Tibial artery (tissue), 4 donors: ENCODE measurements at regions of chr9 and their contacts with region 1.

Region 1: DNA sequence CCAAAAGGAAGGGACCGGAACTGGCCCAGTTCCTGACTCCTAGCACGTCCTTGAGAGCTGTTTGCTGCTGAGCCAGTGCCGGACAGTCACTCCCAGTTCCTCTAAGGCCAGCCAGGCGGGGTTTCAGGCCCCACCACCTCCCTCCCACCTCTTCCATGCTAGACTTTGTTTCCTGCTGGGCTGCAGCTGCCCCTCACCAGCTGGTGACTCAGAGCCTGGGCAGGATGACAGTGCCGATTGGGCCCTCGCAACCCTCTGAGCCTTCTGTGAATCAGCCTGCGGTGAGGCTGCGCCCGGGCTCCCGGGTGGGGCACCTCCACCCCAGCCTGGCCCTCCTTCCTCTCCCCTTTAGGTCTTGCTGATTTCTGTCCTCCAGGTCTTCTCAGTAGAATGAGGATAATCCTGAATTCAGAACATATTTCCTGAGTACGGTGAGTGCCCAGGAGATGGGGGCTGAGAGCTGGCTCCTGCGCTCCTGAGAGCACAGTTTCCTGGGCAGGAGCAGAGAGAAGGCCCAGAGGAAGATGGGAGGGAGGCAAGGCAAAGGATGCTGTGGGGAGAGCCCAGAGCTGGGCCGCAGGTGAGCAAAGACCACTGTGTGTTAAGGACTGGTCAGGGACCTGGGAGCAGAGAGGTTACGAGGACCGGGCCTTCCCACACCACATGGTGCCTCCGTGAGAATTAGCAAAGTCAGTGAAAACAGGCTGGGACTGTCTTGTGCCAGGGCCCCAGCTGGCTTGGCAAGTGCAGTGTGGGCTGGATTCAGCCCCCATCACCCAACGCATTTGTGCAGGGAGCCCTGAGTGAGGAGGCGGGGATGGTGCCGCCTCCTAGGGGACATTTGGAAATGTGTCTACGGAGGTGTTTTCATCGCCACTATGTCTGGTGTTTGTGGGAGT is 32.9 kb upstream of the STXBP1 start:
- DNase-seq: peak; percentile 95 to 98
- H3K4me3 ChIP-seq: peak overlapping the region; percentile 41 to 46
- H3K27ac ChIP-seq: peak overlapping the region; percentile 92
- H3K4me1 ChIP-seq: peaks cover 0 to 55% (median 35%) of the 10 kb centered on the region in 4 donors
- H3K27me3 ChIP-seq: no peaks in the 10 kb centered on the region
- CTCF ChIP-seq: peak; percentile 38 to 45

Region 2: GRCh38 chr9:127519301-127520166 is 59.7 kb before region 1 on chr9:
- intact Hi-C with region 1: loop called (anchors 5 kb)
- DNase-seq: peak in 1 of 2 donors; percentile 77
- H3K4me3 ChIP-seq: no peak overlapping the region
- H3K27ac ChIP-seq: peak overlapping the region; percentile 33 to 85
- H3K4me1 ChIP-seq: peaks cover 0 to 45% (median 32%) of the 10 kb centered on the region in 4 donors
- H3K27me3 ChIP-seq: no peaks in the 10 kb centered on the region
- CTCF ChIP-seq: no peak

Region 3: GRCh38 chr9:127541877-127542276 is 37.3 kb before region 1 on chr9:
- intact Hi-C with region 1: loop called (anchors 5 kb)
- DNase-seq: peak; percentile 94 to 98
- H3K4me3 ChIP-seq: peak overlapping the region in 1 of 2 donors; percentile 16
- H3K27ac ChIP-seq: peak overlapping the region; percentile 76 to 77
- H3K4me1 ChIP-seq: peaks cover 29 to 100% (median 90%) of the 10 kb centered on the region in 4 donors
- H3K27me3 ChIP-seq: no peaks in the 10 kb centered on the region
- CTCF ChIP-seq: no peak

Region 4: DNA sequence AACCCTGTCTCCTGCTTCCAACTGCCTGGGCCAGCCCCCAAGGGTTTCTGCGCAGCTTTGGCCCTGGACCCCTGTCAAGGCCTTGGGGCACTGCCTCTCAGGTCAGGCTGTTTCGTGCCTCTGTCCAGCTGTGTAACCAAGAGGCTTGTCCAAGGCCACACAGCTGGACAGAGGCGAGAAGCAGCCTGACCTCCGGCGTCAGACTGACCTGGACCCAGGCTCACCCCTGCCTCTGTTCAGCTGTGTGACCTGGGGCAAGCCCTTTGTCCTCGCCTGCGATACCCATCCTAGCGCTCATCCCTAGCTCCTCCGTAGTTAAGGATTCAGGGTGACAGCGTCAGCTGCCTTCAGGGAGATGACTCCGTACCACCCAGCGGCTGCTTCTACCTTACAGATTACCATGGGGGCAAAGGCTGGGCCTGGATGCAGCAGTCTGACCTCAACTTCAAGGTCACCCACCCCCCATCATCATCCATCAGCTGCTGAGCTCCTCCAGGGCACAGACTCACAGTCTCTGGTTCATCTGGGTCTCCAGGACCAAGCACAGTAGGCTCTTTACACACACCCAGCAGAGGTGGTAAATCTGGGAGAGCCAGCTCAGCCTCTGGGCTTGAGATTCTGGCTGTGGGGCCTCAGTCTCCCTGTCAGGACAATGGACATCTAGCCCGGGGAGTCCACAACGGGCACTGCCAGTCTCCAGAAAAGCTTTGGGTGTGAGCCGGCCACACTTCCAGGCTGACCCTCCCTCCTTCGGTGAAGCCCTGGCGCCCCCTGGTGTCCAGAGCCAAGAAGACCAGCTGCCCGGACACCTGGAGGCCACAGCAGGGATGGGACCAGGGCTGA is 290.3 kb after region 1 on chr9:
- intact Hi-C with region 1: no loop called
- DNase-seq: peak; percentile 90 to 93
- H3K4me3 ChIP-seq: no peak overlapping the region
- H3K27ac ChIP-seq: peak overlapping the region in 1 of 2 donors; percentile 20
- H3K4me1 ChIP-seq: peaks cover 0 to 17% (median 15%) of the 10 kb centered on the region in 4 donors
- H3K27me3 ChIP-seq: no peaks in the 10 kb centered on the region
- CTCF ChIP-seq: peak; percentile 82 to 95